ENCODE measurements at regions of chr10 and their contacts with region 1.

Region 1: DNA sequence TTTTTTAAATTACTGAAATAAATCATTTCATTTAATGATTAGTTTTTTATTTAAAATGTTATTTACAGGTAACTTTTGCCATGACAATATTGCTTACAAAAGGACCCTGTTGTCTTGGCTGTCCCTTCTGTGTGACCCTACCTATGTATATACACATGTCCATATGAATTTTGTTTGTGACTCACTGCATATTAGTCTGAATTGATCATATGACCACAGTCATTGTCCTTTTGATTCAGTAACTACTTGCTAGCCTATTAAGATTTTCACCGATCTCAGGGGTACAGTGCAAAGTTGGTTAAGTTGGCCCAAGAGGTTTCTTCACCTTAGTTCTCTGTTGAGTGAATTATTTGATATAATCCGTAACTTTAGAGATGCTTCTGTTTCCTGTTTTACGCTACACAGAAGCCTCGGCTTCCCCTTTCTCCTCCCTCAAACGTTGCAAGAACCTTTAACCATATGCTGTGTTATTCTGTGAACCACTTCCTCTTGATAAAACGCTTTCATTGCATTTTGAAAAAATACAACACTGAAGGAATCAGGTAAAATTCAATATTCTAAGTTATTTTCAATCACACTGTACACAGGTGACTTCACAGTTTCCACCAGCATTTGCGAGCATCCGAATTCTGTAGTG is 43.9 kb downstream of the APBB1IP start:
- DNase-seq: no peak
- ATAC-seq: peak; percentile 46
- H3K4me3 ChIP-seq: peak overlapping the region; percentile 54; the same call in 1 of the 2 replicates
- H3K27ac ChIP-seq: peak overlapping the region; percentile 81
- H3K4me1 ChIP-seq: peaks cover 41% of the 10 kb centered on the region
- H3K27me3 ChIP-seq: no peaks in the 10 kb centered on the region
- CTCF ChIP-seq: no peak
- EP300 ChIP-seq: 0 out of 4 replicates have a peak, but pooled peaks of 1 of the 2 experiments have one; percentile 18
- POLR2A ChIP-seq: no peak
- RAD21 ChIP-seq: no peak

Region 2: DNA sequence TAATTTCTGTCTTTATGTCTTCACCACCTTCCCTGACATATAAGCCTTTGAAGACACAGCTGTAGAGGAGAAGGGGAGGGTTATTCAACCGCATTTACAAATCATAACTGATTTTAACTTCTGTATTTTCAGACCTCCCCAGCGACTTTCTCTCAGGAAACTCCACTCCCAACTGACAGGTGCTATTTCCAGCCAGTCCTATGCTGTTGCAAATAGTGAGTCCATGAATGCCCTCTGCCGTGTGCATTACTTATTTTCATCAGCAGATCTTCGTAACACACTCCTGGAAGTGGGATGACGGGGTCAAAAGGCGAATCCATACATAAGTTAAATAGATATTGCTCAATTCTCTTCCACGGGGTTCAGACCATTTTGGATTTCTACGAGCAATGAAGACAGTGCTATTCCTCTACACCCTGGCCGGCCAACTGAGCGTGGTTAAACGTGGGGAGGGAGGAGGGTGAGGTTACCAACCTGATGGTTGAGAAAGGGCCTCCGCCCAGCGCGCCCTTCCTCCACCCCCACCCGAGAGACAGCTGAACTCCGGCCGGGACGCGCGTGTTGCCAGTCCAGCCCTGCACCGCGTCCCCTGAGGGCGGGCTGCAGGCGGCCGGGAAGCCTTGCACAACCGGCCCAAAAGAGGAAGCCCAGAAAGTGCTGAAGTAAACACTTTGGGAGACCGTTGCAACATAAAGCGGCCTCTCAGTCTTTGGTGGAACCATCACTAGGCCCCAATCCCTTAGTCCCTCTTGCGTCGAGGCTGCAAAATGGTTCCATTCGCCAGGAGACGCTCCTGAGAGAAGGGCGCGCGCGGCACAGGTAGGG is 44.2 kb before region 1 on chr10 and contains the start of gene APBB1IP:
- CTCF ChIA-PET with region 1: interaction called, 6 read pairs
- POLR2A ChIA-PET with region 1: interaction called, 8 read pairs
- RAD21 ChIA-PET with region 1: interaction called, 18 read pairs
- SMC1A ChIA-PET with region 1: interaction called, 18 read pairs
- in situ Hi-C with region 1: no loop called
- intact Hi-C with region 1: no loop called
- DNase-seq: peak; percentile 61
- ATAC-seq: peak; percentile 77
- H3K4me3 ChIP-seq: peak within 1 kb of the TSS; percentile 89
- H3K27ac ChIP-seq: peak within 1 kb of the TSS; percentile 95
- H3K4me1 ChIP-seq: peaks cover 15% of the 10 kb centered on the region; the same call in 1 of the 2 replicates
- H3K27me3 ChIP-seq: no peaks in the 10 kb centered on the region
- CTCF ChIP-seq: peak in 2 of 3 experiments; percentile 4 to 6; a peak in 1 of 6 replicates
- EP300 ChIP-seq: peak in 1 of 2 experiments; percentile 6; a peak in 1 of 4 replicates
- POLR2A ChIP-seq: peak; percentile 64
- RAD21 ChIP-seq: peak; percentile 20
- polyA plus RNA-seq, gene APBB1IP: 7.3 to 11.4 TPM

Region 3: GRCh38 chr10:26468700-26469099 is 13.3 kb before region 1 on chr10:
- CTCF ChIA-PET with region 1: interaction called, 7 read pairs
- POLR2A ChIA-PET with region 1: interaction called, 19 read pairs
- RAD21 ChIA-PET with region 1: interaction called, 9 read pairs
- SMC1A ChIA-PET with region 1: interaction called, 22 read pairs
- in situ Hi-C with region 1: no loop called
- intact Hi-C with region 1: no loop called
- DNase-seq: no peak
- ATAC-seq: peak; percentile 72
- H3K4me3 ChIP-seq: peak overlapping the region; percentile 61
- H3K27ac ChIP-seq: peak overlapping the region; percentile 67
- H3K4me1 ChIP-seq: peaks cover 75% of the 10 kb centered on the region
- H3K27me3 ChIP-seq: no peaks in the 10 kb centered on the region
- CTCF ChIP-seq: no peak
- EP300 ChIP-seq: no peak
- POLR2A ChIP-seq: 0 out of 2 replicates have a peak, but pooled peaks have one; percentile 24
- RAD21 ChIP-seq: no peak

Region 4: GRCh38 chr10:26516540-26517101 is 34.6 kb after region 1 on chr10:
- CTCF ChIA-PET with region 1: no interaction called
- POLR2A ChIA-PET with region 1: interaction called, 10 read pairs
- RAD21 ChIA-PET with region 1: no interaction called
- SMC1A ChIA-PET with region 1: interaction called, 3 read pairs
- in situ Hi-C with region 1: no loop called
- intact Hi-C with region 1: no loop called
- DNase-seq: no peak
- ATAC-seq: no peak
- H3K4me3 ChIP-seq: no peak overlapping the region
- H3K27ac ChIP-seq: no peak overlapping the region
- H3K4me1 ChIP-seq: no peaks in the 10 kb centered on the region
- H3K27me3 ChIP-seq: no peaks in the 10 kb centered on the region
- CTCF ChIP-seq: no peak
- EP300 ChIP-seq: no peak
- POLR2A ChIP-seq: no peak
- RAD21 ChIP-seq: no peak

Region 5: DNA sequence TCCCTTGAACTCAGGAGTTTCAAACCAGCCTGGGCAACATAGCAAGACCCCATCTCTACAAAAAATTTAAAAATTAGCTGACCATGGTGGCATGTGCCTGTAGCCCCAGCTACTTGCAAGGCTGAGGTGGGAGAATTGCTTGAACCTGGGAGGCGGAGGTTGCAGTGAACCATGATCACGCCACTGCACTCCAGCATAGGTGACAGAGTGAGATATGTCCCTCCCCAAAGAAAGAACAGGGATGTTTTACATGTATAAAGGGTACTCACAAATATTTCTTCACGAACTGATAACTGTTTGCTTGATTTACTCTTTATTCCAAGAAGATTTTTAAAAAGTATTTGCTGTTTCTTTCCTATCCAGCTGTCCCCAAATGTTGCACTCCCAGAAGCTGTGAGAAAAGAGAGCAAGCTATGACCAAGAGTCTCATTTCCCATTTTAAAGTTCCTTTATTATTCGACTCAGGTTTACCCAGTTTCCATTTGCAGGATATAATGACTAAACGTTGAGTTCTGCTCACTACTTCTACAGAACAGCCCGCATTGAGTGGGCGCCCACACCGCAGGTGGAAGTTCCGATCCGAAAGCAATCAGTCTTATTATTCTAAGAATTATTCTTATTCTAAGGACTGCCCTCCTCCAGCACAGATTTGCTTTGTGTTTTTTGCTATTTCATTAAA is 46.8 kb after region 1 on chr10:
- CTCF ChIA-PET with region 1: no interaction called
- POLR2A ChIA-PET with region 1: interaction called, 7 read pairs
- RAD21 ChIA-PET with region 1: no interaction called
- SMC1A ChIA-PET with region 1: interaction called, 3 read pairs
- in situ Hi-C with region 1: no loop called
- intact Hi-C with region 1: loop called (anchors 5 kb)
- DNase-seq: peak; percentile 50
- ATAC-seq: peak; percentile 85
- H3K4me3 ChIP-seq: peak overlapping the region; percentile 21; the same call in 1 of the 2 replicates
- H3K27ac ChIP-seq: peak overlapping the region; percentile 36
- H3K4me1 ChIP-seq: peaks cover 19% of the 10 kb centered on the region
- H3K27me3 ChIP-seq: no peaks in the 10 kb centered on the region
- CTCF ChIP-seq: no peak
- EP300 ChIP-seq: peak; percentile 21 to 45; a peak in 1 of 4 replicates
- POLR2A ChIP-seq: no peak
- RAD21 ChIP-seq: no peak

Region 6: DNA sequence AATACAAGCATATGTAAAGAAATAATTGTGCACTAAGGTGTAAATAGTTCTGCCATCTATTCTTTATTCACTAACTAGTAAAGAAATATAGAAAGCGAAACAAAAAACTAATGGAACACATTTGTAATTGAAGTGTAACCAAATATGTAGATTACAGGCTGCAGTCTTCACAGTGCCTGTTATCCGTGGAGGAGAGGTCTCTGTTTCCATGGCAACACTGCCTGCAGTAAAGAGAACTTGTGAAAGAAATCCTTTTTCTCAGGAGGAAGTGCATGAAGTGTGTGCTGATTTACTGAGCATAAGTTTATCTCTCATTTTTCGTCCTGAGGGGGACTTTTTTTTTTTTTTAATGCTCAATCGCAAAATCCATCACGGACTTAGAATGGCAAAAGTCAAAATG is 58.6 kb after region 1 on chr10:
- CTCF ChIA-PET with region 1: no interaction called
- POLR2A ChIA-PET with region 1: interaction called, 4 read pairs
- RAD21 ChIA-PET with region 1: interaction called, 3 read pairs
- SMC1A ChIA-PET with region 1: no interaction called
- in situ Hi-C with region 1: no loop called
- intact Hi-C with region 1: loop called (anchors 5 kb)
- DNase-seq: peak; percentile 37
- ATAC-seq: peak; percentile 68
- H3K4me3 ChIP-seq: no peak overlapping the region
- H3K27ac ChIP-seq: 0 out of 2 replicates have a peak overlapping the region, but pooled peaks have one; percentile 37
- H3K4me1 ChIP-seq: peaks cover 28% of the 10 kb centered on the region
- H3K27me3 ChIP-seq: no peaks in the 10 kb centered on the region
- CTCF ChIP-seq: no peak
- EP300 ChIP-seq: no peak
- POLR2A ChIP-seq: no peak
- RAD21 ChIP-seq: no peak

Measured in GM12878 (cell line).